ENCODE measurements at regions of chr17 and their contacts with region 1.

Region 1: DNA sequence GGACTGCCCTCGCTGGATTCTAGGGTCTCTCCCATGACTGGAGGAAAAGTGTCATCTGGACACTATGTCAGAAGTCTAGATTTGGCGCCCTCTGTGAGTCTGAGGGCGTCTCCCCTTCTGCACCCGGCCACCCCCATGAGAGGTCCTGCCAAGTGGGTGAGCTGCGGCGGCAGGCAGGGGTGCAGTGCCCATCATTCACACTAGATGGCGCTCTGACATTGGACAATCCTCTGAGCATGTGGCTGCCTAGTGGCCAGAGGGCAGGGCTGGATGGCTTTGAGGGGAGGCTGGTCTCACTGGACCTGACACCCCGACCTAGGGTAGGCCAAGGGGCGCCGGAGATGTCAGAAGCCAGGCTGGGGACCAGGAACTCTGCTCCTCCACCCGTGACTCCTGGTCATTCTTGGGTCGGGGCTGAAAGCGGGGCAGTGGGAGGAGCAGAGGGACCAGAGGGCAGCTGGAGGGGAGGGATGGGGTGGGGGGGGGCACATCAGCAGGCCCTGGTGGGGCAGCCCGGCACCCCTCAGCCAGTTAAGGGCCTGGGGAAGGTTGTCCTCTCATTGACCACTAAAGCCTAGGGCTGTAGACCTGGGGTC is 28.0 kb downstream of the MRM1 start:
- DNase-seq: peak; percentile 85
- H3K4me3 Mint-ChIP-seq: no peak overlapping the region
- H3K27ac Mint-ChIP-seq: no peak overlapping the region
- H3K4me1 Mint-ChIP-seq: no peaks in the 10 kb centered on the region
- H3K27me3 Mint-ChIP-seq: peaks cover 31% of the 10 kb centered on the region

Region 2: DNA sequence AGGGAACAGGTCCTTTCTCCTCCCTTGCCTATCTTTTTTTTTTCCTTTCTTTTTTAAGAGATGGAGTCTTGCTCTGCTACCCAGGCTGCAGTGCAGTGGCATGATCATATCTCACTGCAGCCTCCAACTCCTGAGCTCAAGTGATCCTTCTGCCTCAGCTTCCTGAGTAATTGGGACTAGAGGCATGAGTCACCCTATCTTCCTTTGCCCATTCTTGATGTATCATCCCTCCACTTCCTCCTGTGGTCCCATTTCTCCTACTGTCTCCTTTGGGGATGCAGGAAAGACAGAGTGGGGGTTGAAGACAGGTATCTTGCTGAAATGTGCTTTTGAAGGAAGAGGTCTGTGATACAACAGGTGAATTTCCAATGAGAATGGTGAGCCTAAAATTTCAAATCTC is 100.2 kb before region 1 on chr17:
- CTCF ChIA-PET with region 1: no interaction called
- DNase-seq: no peak
- H3K4me3 Mint-ChIP-seq: no peak overlapping the region
- H3K27ac Mint-ChIP-seq: peak overlapping the region; percentile 37
- H3K4me1 Mint-ChIP-seq: peaks cover 50% of the 10 kb centered on the region
- H3K27me3 Mint-ChIP-seq: no peaks in the 10 kb centered on the region

Region 3: GRCh38 chr17:36601303-36602029 is 27.9 kb before region 1 on chr17 and contains the start of gene MRM1:
- CTCF ChIA-PET with region 1: interaction called, 27 read pairs
- DNase-seq: peak; percentile 94
- H3K4me3 Mint-ChIP-seq: peak within 1 kb of the TSS; percentile 86
- H3K27ac Mint-ChIP-seq: peak within 1 kb of the TSS; percentile 92
- H3K4me1 Mint-ChIP-seq: peaks cover 39% of the 10 kb centered on the region
- H3K27me3 Mint-ChIP-seq: no peaks in the 10 kb centered on the region

Region 4: GRCh38 chr17:36614933-36615332 is 14.4 kb before region 1 on chr17:
- CTCF ChIA-PET with region 1: interaction called, 11 read pairs
- DNase-seq: no peak
- H3K4me3 Mint-ChIP-seq: no peak overlapping the region
- H3K27ac Mint-ChIP-seq: no peak overlapping the region
- H3K4me1 Mint-ChIP-seq: no peaks in the 10 kb centered on the region
- H3K27me3 Mint-ChIP-seq: peaks cover 15% of the 10 kb centered on the region

Region 5: DNA sequence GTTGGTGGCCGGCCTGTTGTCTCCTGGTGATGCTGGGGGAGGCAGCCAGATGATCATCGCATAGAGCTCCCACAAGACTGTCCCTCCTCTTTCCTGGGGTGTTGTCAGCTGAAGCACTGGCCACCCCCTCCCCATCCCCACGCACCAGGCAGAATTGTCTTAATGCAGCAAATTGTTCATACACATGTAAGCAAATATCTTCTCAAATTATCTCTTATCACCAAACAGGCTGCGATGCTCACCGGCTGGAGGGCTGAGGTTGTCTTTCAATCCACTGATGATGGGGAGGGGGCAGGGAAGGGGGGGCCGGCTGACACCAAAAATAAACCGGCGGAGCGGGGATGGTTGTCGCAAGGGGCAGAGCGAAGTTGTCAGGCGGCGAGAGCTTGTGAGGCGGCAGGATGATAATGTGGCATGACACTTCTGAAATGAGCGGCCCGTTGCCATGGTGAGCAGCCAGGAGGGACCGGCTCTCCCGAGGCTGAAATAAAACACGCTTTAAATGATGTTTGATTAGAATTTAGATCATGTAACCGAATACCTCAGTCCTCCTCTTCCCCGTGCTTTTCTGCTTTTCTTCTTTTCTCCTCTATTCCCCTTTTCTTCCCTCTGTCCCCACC is 31.8 kb after region 1 on chr17:
- CTCF ChIA-PET with region 1: no interaction called
- DNase-seq: no peak
- H3K4me3 Mint-ChIP-seq: no peak overlapping the region
- H3K27ac Mint-ChIP-seq: no peak overlapping the region
- H3K4me1 Mint-ChIP-seq: peaks cover 8% of the 10 kb centered on the region
- H3K27me3 Mint-ChIP-seq: peaks cover 81% of the 10 kb centered on the region

Region 6: GRCh38 chr17:36705874-36706731 is 76.8 kb after region 1 on chr17:
- CTCF ChIA-PET with region 1: interaction called, 18 read pairs
- DNase-seq: peak; percentile 69
- H3K4me3 Mint-ChIP-seq: no peak overlapping the region
- H3K27ac Mint-ChIP-seq: no peak overlapping the region
- H3K4me1 Mint-ChIP-seq: no peaks in the 10 kb centered on the region
- H3K27me3 Mint-ChIP-seq: peaks cover 40% of the 10 kb centered on the region

Region 7: DNA sequence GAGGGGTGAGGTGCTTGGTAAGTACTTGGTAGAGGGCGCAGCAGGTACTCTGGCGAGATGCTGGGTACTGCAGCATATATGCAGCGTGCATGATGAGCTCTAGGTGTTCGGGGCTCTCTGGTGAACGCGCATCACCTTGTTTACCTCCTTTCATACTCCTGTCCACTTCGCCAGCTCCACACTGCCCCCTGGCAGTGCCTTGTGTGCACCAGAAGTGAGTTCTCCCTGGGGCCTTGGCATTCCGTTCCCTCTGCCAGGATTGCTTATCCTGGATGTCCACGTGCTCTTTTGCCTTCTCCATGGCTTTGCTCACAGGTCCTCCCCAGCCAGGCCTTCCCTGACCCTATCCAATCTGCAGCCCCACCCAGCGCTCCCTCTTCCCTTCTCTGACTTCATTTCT is 126.2 kb after region 1 on chr17:
- CTCF ChIA-PET with region 1: interaction called, 17 read pairs
- DNase-seq: peak; percentile 56
- H3K4me3 Mint-ChIP-seq: no peak overlapping the region
- H3K27ac Mint-ChIP-seq: no peak overlapping the region
- H3K4me1 Mint-ChIP-seq: no peaks in the 10 kb centered on the region
- H3K27me3 Mint-ChIP-seq: peaks cover 15% of the 10 kb centered on the region

Region 8: GRCh38 chr17:36812762-36813161 is 183.4 kb after region 1 on chr17:
- CTCF ChIA-PET with region 1: no interaction called
- DNase-seq: no peak
- H3K4me3 Mint-ChIP-seq: no peak overlapping the region
- H3K27ac Mint-ChIP-seq: no peak overlapping the region
- H3K4me1 Mint-ChIP-seq: no peaks in the 10 kb centered on the region
- H3K27me3 Mint-ChIP-seq: peaks cover 84% of the 10 kb centered on the region

Region 9: DNA sequence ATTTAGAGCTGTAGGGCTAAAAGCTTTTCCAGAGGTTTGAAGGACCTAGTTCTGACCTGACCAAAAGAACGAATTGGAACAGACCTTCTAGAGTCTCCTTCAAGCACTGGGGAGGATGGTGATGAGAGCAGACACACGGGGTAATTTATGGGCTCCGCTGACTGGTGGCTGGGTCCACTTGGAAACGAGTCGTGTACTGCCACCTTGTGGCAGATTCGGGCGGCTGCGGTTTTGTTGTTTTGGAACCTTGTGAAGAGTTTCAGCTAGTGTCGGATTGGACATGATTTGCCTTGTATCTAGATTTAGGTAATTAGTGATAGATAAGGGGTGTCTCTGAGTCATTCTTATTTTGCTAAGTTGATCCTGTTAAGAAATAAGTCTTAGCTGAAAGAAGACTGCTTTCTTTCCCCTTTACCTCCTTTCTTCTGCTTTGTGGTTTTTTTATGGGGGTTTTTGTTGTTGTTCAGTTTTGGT is 418.3 kb after region 1 on chr17:
- CTCF ChIA-PET with region 1: interaction called, 63 read pairs
- DNase-seq: peak; percentile 86
- H3K4me3 Mint-ChIP-seq: no peak overlapping the region
- H3K27ac Mint-ChIP-seq: peak overlapping the region; percentile 49
- H3K4me1 Mint-ChIP-seq: peaks cover 10% of the 10 kb centered on the region
- H3K27me3 Mint-ChIP-seq: no peaks in the 10 kb centered on the region